Activated T-helper 1 cell treated with anti-CD3 and anti-CD28 coated beads, Interleukin-12 subunit alpha, Interleukin-12 subunit beta, Interleukin-2, Interleukin-4 antibody, amounts not matched to agents 30 ng/mL and 10 ng/mL and 1 ng/mL, durations not matched to agents 14 hours and 24 hours and 36 hours (primary cell): ENCODE measurements at regions of chr5 and their contacts with region 1.

Region 1: GRCh38 chr5:35857606-35858205 is 1.0 kb downstream of the IL7R start:
- DNase-seq: no peak
- H3K4me3 Mint-ChIP-seq: peak overlapping the region; percentile 83
- H3K27ac Mint-ChIP-seq: peak overlapping the region; percentile 94
- H3K4me1 Mint-ChIP-seq: peaks cover 96% of the 10 kb centered on the region
- H3K27me3 Mint-ChIP-seq: no peaks in the 10 kb centered on the region

Region 2: GRCh38 chr5:35870605-35871004 is 12.9 kb after region 1 on chr5:
- intact Hi-C with region 1: loop called (anchors 1 kb)
- DNase-seq: no peak
- H3K4me3 Mint-ChIP-seq: no peak overlapping the region
- H3K27ac Mint-ChIP-seq: no peak overlapping the region
- H3K4me1 Mint-ChIP-seq: peaks cover 79% of the 10 kb centered on the region
- H3K27me3 Mint-ChIP-seq: no peaks in the 10 kb centered on the region

Region 3: GRCh38 chr5:35884115-35884788 is 26.5 kb after region 1 on chr5:
- intact Hi-C with region 1: loop called (anchors 2 kb)
- DNase-seq: no peak
- H3K4me3 Mint-ChIP-seq: peak overlapping the region; percentile 47
- H3K27ac Mint-ChIP-seq: peak overlapping the region; percentile 88
- H3K4me1 Mint-ChIP-seq: peaks cover 49% of the 10 kb centered on the region
- H3K27me3 Mint-ChIP-seq: peaks cover 2% of the 10 kb centered on the region

Region 4: GRCh38 chr5:36041538-36041846 is 183.8 kb after region 1 on chr5:
- intact Hi-C with region 1: no loop called
- DNase-seq: no peak
- H3K4me3 Mint-ChIP-seq: no peak overlapping the region
- H3K27ac Mint-ChIP-seq: no peak overlapping the region
- H3K4me1 Mint-ChIP-seq: no peaks in the 10 kb centered on the region
- H3K27me3 Mint-ChIP-seq: peaks cover 6% of the 10 kb centered on the region

Region 5: DNA sequence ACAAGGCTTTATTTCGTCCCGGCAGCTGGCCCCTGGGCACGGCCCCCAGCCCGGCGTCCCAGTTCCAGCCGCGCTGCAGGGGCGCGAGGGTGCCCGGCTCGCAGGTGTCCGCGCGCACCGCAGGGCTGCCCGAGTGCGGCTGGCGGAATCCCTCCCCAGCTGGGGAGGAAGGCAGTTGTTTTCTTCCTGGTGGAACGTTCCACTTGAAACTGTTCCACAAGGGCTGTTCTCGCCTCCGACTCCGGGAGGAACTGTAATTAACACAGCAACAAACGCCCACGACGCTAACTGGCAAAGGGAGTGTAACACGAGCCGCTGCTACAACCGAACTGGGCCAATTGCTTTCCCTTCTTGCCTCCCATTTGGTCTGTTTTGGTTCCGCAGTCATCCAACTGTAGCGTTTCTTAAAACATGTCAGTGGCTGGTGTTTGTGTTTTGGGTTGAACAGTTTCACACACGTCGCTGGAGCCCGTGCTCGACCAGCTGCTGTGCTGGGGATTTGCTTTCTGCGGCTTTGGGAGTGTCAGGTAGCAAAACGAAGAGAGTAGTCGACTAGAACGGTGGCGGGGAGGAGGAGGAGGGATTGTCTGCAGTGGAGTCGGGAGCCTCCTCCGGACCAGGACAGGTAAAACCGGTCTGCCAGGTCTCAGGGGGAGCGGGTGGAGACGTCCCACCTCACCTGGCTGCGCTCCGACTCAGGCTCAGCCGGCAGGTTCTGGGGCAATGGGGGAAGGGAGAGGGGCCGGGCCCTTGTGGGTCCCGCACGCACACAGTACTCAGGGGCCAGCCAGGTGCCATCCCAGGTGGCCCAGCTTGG is 887.3 kb after region 1 on chr5:
- intact Hi-C with region 1: no loop called
- DNase-seq: peak; percentile 8
- H3K4me3 Mint-ChIP-seq: peak overlapping the region; percentile 85
- H3K27ac Mint-ChIP-seq: no peak overlapping the region
- H3K4me1 Mint-ChIP-seq: peaks cover 18% of the 10 kb centered on the region
- H3K27me3 Mint-ChIP-seq: peaks cover 29% of the 10 kb centered on the region